CD4-positive, alpha-beta T cell (primary cell): ENCODE measurements at regions of chr17 and their contacts with region 1.

Region 1: DNA sequence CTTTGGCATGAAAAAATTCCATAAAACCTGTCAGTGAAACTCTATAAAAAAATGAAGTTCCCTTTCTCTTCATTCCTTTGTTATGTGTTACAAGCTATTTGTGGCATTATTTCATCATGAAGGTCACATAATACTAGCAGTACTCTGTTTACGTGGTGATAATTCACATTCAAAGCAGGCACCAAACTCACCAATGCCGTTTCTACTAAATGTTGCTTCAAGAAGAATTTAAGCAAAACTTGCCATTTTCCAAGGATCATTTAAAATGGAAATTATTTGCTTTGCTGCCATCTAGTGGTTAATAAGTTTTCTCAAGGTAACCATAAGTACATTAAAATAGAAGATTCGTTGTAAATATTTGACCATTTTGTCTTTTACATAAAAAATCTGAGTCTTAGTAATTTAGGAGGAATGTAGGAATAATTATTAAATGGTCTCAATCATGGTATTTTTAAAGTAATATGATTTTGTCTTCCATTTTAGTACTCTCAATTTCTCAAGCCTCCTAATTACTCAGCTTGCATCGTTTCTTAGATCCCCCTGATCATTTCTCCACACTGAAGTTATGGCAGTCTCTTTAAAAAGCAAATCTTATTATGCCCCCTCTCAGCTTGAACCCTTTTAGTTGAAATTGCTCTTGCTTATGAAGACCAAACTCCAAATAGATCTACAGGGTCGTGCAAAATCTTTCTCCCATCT is 80.8 kb downstream of the OMG start:
- DNase-seq: peak in 3 of 14 experiments; percentile 51 to 62 (median 57)
- ATAC-seq: no peak
- H3K4me3 ChIP-seq: no peak overlapping the region
- H3K4me3 Mint-ChIP-seq: no peak overlapping the region
- H3K27ac ChIP-seq: no peak overlapping the region
- H3K27ac Mint-ChIP-seq: no peak overlapping the region
- H3K4me1 ChIP-seq: no peaks in the 10 kb centered on the region
- H3K4me1 Mint-ChIP-seq: no peaks in the 10 kb centered on the region
- H3K27me3 ChIP-seq: no peaks in the 10 kb centered on the region
- H3K27me3 Mint-ChIP-seq: no peaks in the 10 kb centered on the region
- CTCF ChIP-seq: peak; percentile 81

Region 2: GRCh38 chr17:30970831-30971567 is 245.2 kb before region 1 on chr17 and contains the start of gene RNF135:
- CTCF ChIA-PET with region 1: no interaction called
- POLR2A ChIA-PET with region 1: no interaction called
- intact Hi-C with region 1: loop called in 1 of 2 experiments (anchors 1 kb)
- DNase-seq: peak; percentile 14 to 80 (median 46)
- ATAC-seq: peak; percentile 54
- H3K4me3 ChIP-seq: peak within 1 kb of the TSS; percentile 81
- H3K4me3 Mint-ChIP-seq: peak within 1 kb of the TSS; percentile 97
- H3K27ac ChIP-seq: peak within 1 kb of the TSS in 1 of 2 donors; percentile 7
- H3K27ac Mint-ChIP-seq: peak within 1 kb of the TSS; percentile 88
- H3K4me1 ChIP-seq: peaks cover 14% of the 10 kb centered on the region
- H3K4me1 Mint-ChIP-seq: peaks cover 26% of the 10 kb centered on the region
- H3K27me3 ChIP-seq: no peaks in the 10 kb centered on the region
- H3K27me3 Mint-ChIP-seq: no peaks in the 10 kb centered on the region
- CTCF ChIP-seq: no peak
- total RNA-seq, gene RNF135: 1.5 to 1.8 TPM

Region 3: GRCh38 chr17:31008374-31009041 is 207.7 kb before region 1 on chr17:
- CTCF ChIA-PET with region 1: interaction called, 4 read pairs
- POLR2A ChIA-PET with region 1: no interaction called
- intact Hi-C with region 1: loop called (anchors 1 to 2 kb)
- DNase-seq: peak; percentile 15 to 76 (median 49)
- ATAC-seq: peak; percentile 71
- H3K4me3 ChIP-seq: peak overlapping the region; percentile 74
- H3K4me3 Mint-ChIP-seq: peak overlapping the region; percentile 98
- H3K27ac ChIP-seq: peak overlapping the region in 1 of 2 donors; percentile 44
- H3K27ac Mint-ChIP-seq: peak overlapping the region; percentile 93
- H3K4me1 ChIP-seq: peaks cover 12% of the 10 kb centered on the region
- H3K4me1 Mint-ChIP-seq: peaks cover 17% of the 10 kb centered on the region
- H3K27me3 ChIP-seq: no peaks in the 10 kb centered on the region
- H3K27me3 Mint-ChIP-seq: no peaks in the 10 kb centered on the region
- CTCF ChIP-seq: no peak

Region 4: DNA sequence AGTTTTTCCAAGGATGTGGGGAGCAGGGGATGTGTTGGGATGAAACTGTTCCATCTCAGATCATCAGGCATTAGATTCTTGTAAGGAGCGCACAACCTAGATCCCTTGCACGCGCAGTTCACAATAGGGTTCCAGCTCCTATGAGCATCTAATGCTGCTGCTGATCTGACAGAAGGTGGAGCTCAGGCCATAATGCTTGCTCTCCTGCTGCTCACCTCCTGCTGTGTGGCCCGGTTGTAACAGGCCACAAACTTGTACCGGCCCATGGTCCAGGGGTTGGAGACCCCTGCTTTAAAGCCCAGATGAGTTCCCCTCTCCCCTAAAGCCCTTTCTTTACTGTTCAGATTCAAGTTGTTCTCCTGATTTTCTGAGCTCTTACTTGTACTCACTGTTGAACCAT is 200.6 kb before region 1 on chr17:
- CTCF ChIA-PET with region 1: interaction called, 4 read pairs
- POLR2A ChIA-PET with region 1: no interaction called
- intact Hi-C with region 1: loop called (anchors 1 to 2 kb)
- DNase-seq: no peak
- ATAC-seq: no peak
- H3K4me3 ChIP-seq: no peak overlapping the region
- H3K4me3 Mint-ChIP-seq: no peak overlapping the region
- H3K27ac ChIP-seq: no peak overlapping the region
- H3K27ac Mint-ChIP-seq: no peak overlapping the region
- H3K4me1 ChIP-seq: no peaks in the 10 kb centered on the region
- H3K4me1 Mint-ChIP-seq: no peaks in the 10 kb centered on the region
- H3K27me3 ChIP-seq: no peaks in the 10 kb centered on the region
- H3K27me3 Mint-ChIP-seq: no peaks in the 10 kb centered on the region
- CTCF ChIP-seq: no peak